ENCODE measurements at regions of chr13 and their contacts with region 1.

Region 1: DNA sequence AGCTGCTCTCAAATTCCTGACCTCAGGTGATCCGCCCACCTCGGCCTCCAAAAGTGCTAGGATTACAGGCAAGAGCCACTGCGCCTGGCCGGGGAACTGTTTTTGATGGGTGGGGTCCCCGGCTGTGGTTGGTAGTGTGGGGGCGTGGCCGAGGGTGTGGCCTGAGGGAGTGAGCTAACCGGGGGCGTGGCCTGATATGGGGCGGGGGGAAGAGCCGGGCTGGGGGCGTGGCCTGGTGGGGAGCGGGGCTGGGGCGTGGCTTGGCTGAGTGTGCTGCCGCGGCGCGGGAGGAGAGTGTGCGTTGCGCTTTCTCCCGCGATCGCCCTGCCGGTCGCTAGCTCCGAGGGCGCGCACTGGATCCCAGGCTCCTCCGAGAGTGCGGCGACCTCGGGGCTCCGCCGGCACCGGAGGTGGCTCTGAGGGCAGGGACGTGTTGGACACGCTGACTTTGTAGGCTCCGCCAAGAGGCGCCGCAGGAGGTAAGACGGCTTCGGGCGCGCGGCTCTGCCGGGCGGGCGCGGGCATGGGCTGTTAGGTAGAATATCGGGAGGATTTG is at the start of gene SPATA13:
- DNase-seq: peak; percentile 84
- ATAC-seq: peak; percentile 93
- H3K4me3 ChIP-seq: peak within 1 kb of the TSS; percentile 94
- H3K27ac ChIP-seq: peak within 1 kb of the TSS; percentile 63
- H3K4me1 ChIP-seq: peaks cover 19% of the 10 kb centered on the region
- H3K27me3 ChIP-seq: no peaks in the 10 kb centered on the region
- CTCF ChIP-seq: no peak
- POLR2A ChIP-seq: peak; percentile 64; the same call in 1 of the 2 replicates
- RAD21 ChIP-seq: no peak
- total RNA-seq, gene SPATA13: 11.4 and 12.5 TPM in 2 replicates

Region 2: DNA sequence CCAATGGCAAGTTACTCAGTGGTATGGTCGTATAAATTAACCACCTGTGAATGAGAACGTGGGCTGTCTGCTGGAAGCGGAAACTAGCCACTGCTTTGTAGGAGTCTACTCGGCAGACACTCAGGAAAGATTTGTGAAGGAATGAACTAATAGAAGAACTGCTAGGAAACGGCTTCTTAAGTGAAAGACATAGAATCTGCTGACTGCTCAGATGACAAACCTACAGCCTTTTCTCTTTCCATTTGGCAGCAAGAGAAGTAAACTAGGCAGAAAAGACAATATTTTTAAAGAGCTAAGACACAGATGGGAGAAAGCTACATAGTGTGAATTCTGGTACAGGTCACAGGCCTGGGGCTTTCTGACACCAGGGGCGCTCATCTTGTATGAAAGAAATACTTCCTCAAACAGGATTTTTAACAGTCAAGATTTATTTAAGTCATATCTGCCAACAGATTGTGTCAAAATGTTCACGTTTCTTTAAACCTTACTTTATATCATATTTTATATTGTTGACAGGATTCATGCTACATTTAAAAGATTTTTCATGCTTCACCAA is 349.8 kb before region 1 on chr13:
- CTCF ChIA-PET with region 1: no interaction called
- POLR2A ChIA-PET with region 1: no interaction called
- dilution Hi-C with region 1: no loop called
- in situ Hi-C with region 1: no loop called
- intact Hi-C with region 1: no loop called
- DNase-seq: no peak
- ATAC-seq: no peak
- H3K4me3 ChIP-seq: no peak overlapping the region
- H3K27ac ChIP-seq: peak overlapping the region; percentile 47; the same call in 1 of the 2 replicates
- H3K4me1 ChIP-seq: peaks cover 16% of the 10 kb centered on the region
- H3K27me3 ChIP-seq: no peaks in the 10 kb centered on the region
- CTCF ChIP-seq: no peak
- POLR2A ChIP-seq: no peak
- RAD21 ChIP-seq: no peak

Region 3: DNA sequence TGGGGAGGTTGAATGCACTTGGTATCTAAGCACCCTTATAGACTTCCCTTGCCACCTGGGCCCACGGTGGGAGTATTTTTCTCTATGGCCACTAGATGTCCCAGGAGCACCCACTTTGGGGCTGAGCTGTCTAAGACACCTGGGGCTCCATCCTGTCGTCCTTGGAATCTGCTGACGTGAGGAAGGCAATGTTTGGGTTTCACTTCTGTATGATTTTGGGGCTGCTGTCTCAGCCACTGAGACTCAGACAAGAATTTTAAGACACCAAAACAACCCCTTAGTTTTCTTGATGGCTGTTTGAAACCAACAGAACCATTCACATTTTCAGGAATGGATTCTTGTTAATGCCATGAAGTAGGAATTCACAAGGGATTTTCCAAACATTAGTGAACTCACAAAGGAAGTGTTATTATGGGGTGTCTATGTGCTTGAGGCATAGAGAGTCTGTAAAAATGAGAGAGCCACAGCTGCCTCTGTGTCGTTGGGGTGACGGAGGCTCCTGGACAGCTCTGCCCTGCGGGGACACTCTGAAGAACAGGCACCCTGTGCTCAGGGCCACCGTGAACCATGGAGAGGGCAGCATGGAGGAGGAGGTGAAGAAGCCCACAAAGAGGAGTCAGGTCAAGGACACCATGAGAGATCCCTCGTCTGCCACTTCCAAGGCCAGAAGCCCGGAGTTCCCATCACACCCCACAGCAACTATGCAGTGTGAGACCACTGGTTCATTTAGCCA is 106.8 kb before region 1 on chr13:
- CTCF ChIA-PET with region 1: no interaction called
- POLR2A ChIA-PET with region 1: no interaction called
- dilution Hi-C with region 1: no loop called
- in situ Hi-C with region 1: no loop called
- intact Hi-C with region 1: loop called (anchors 5 kb)
- DNase-seq: peak; percentile 68
- ATAC-seq: peak; percentile 86
- H3K4me3 ChIP-seq: no peak overlapping the region
- H3K27ac ChIP-seq: no peak overlapping the region
- H3K4me1 ChIP-seq: peaks cover 14% of the 10 kb centered on the region
- H3K27me3 ChIP-seq: no peaks in the 10 kb centered on the region
- CTCF ChIP-seq: peak; percentile 70
- POLR2A ChIP-seq: no peak
- RAD21 ChIP-seq: peak; percentile 84

Region 4: GRCh38 chr13:24203811-24204210 is 43.3 kb after region 1 on chr13:
- CTCF ChIA-PET with region 1: no interaction called
- POLR2A ChIA-PET with region 1: no interaction called
- dilution Hi-C with region 1: no loop called
- in situ Hi-C with region 1: no loop called
- intact Hi-C with region 1: loop called (anchors 5 kb)
- DNase-seq: peak; percentile 50
- ATAC-seq: peak; percentile 79
- H3K4me3 ChIP-seq: no peak overlapping the region
- H3K27ac ChIP-seq: no peak overlapping the region
- H3K4me1 ChIP-seq: peaks cover 4% of the 10 kb centered on the region
- H3K27me3 ChIP-seq: no peaks in the 10 kb centered on the region
- CTCF ChIP-seq: no peak
- POLR2A ChIP-seq: no peak
- RAD21 ChIP-seq: no peak